Mucosa of descending colon (tissue), 3 donors: ENCODE measurements at regions of chr11 and their contacts with region 1.

Region 1: GRCh38 chr11:75248690-75249268 is 8.2 kb downstream of the TPBGL start:
- DNase-seq: peak; percentile 82 to 93 (median 89)
- ATAC-seq: peak; percentile 98
- H3K4me3 ChIP-seq: no peak overlapping the region
- H3K4me1 ChIP-seq: no peaks in the 10 kb centered on the region
- CTCF ChIP-seq: peak; percentile 96

Region 2: DNA sequence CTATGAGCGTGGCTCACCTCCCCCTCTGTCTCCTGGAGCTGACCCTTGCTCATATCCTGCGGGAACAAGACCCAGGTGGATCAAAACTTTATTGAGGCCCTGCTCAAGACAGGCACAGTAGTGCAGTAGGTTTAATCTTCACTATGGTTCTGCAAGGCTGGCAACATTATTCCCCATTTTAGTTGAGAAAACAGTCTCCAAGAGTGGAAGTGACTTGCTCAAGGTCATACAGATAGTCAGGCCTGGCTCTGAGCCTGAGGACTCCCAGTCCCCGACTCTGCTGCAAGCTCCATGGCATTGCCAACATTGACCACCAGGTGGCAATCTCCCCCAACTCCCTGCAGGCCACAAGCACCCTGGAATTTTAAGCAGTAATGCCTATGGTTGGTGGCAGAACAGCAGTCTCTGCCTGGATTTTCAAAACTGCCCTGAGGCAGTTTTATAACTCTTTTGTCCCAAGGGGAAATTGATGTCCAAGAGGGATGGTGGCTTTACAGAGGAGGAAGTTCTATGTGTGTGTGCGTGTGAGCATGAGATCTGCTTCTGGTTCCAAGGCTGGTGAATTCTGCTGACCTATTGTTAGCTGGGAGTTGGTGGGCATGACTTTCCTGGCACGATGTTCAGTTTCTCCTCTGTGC is 225.9 kb before region 1 on chr11:
- intact Hi-C with region 1: loop called in 1 of 2 experiments (anchors 5 kb)
- DNase-seq: peak; percentile 68 to 88 (median 85)
- ATAC-seq: peak; percentile 96
- H3K4me3 ChIP-seq: no peak overlapping the region
- H3K4me1 ChIP-seq: no peaks in the 10 kb centered on the region
- CTCF ChIP-seq: peak; percentile 94

Region 3: DNA sequence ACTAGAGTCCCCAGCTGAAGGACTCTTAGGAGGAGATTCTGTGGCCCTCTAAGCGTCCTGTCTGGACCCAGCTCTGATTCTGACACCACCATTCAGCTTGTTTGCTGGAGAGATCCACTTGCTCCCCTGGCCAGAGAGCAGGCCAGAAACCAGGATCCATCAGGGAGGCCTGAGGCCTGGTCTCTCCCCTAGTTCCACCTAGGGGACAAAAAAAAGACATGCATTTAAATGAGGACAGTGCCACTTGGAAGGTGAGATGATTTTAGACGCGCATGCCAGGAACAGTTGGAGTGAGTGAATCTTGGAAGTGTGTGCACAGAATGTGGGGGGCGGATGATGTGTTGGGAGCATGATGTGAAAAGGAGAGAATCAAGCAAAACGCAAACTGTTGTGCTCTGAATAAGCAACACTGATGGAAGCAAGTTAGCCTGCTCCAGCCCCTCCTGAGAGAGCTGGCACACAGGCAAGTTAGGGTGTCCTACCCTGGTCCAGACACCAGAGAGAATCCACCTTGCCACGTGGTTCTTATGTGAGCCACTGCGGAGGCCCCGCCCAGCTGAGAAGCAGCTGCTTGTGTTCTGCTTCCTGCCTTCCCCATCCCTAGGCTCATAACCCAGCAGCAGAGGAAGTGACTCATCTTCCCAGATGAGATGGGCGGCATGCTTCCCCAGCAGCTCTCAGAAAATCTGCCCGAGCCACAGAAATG is 105.9 kb before region 1 on chr11:
- intact Hi-C with region 1: loop called (anchors 5 kb)
- DNase-seq: peak; percentile 68 to 84 (median 74)
- ATAC-seq: peak; percentile 85
- H3K4me3 ChIP-seq: no peak overlapping the region
- H3K4me1 ChIP-seq: peaks cover 31% of the 10 kb centered on the region
- CTCF ChIP-seq: no peak

Region 4: DNA sequence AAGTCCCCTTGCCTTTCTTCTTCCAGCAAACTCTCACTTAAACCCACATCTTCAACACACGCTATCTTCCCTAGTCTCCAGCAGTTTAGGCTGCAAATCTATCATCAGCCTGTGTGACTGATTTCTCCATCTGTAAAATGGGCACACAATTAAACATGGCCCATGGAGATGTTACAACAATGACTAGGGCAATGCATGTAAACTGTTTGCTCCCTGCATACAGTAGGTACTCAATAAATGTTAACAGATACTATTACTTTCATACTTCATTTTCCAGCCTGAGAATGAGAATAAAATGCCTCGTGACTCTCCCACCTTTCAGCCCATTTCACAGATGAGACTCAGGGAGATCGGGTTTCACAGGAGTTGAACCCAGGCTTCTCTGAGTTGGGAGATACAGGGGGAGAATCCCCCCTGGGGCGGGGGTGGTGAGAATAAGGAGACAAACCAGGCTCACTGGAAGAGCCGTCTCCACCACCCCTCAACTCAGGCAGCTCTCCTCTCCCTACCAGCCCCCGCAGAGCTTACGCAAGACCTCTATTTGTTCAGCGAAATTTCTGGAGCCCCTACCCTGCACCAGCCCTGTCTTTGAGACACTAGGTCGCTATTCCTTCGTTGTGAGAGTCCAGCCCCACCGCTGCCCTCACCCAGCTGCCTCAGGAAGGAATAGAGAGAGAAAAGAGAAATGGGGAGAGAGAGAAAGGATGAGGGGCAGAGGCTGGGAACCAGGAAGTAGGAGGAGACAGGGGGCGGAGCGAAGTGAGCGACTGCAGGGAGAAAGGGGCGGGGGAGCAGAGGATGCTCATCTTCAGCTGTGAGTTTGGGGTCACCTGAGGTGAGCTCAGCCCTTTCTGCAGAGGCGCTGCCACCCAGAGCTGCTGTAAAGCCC is 226.3 kb after region 1 on chr11:
- intact Hi-C with region 1: no loop called
- DNase-seq: peak; percentile 63 to 77 (median 71)
- ATAC-seq: peak; percentile 57
- H3K4me3 ChIP-seq: no peak overlapping the region
- H3K4me1 ChIP-seq: no peaks in the 10 kb centered on the region
- CTCF ChIP-seq: no peak